Gastrocnemius medialis (tissue), 4 donors: ENCODE measurements at regions of chr19 and their contacts with region 1.

Region 1: DNA sequence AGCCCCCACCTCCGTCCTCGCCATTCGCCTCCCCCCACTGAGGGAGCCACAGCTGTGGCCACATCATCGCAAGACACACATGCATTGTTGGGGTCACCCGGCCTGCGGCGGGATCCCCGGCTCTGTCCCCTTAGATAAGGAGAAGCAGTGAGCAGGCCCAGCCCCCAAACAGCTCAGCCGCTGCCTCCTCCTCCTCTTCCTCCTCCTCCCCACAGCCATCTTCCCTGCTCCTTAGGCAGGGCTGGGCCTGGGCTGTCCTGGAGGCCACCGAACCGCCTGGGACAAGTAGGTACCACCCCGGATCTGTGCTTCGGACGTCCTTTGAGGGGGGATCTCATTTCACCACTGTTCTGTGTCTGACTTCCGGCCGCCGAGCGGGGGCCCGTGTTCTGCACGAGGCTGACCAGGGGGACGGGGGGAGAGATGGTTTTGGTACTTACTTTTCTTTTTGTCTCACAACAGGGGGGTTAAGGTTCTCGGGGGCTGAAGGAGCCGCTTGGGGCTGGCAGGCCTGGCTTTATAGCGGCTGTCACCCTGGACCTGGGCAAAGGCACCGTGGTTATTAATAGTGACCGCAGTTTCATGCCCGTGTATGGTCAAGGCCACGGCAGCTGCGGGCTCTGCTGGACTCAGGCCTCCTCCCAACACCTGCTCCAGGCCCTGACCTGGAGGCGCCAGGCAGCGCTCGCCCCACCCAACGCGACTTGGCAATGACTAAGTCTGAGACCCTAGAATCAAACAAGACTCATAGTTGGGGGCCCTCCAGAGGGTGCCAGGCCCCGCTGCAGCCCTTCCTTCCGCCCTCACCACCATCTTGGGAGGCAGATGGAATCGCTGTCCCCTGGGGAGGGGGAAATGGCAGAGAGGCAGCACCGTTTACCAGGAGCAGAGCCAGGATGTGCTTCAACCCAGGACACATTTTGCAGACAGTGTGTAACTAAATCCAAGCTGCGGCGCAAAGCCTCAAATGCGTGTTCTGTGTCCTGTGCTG is 18.3 kb downstream of the NMRK2 start:
- DNase-seq: peak; percentile 92 to 97
- ATAC-seq: peak; percentile 61 to 71
- H3K4me3 ChIP-seq: peak overlapping the region; percentile 74 to 85 (median 80)
- H3K27ac ChIP-seq: peak overlapping the region; percentile 98 to 99 (median 99)
- H3K4me1 ChIP-seq: peaks cover 32 to 48% of the 10 kb centered on the region in 2 donors
- H3K27me3 ChIP-seq: no peaks in the 10 kb centered on the region
- CTCF ChIP-seq: no peak
- POLR2A ChIP-seq: peak; percentile 87 to 92

Region 2: DNA sequence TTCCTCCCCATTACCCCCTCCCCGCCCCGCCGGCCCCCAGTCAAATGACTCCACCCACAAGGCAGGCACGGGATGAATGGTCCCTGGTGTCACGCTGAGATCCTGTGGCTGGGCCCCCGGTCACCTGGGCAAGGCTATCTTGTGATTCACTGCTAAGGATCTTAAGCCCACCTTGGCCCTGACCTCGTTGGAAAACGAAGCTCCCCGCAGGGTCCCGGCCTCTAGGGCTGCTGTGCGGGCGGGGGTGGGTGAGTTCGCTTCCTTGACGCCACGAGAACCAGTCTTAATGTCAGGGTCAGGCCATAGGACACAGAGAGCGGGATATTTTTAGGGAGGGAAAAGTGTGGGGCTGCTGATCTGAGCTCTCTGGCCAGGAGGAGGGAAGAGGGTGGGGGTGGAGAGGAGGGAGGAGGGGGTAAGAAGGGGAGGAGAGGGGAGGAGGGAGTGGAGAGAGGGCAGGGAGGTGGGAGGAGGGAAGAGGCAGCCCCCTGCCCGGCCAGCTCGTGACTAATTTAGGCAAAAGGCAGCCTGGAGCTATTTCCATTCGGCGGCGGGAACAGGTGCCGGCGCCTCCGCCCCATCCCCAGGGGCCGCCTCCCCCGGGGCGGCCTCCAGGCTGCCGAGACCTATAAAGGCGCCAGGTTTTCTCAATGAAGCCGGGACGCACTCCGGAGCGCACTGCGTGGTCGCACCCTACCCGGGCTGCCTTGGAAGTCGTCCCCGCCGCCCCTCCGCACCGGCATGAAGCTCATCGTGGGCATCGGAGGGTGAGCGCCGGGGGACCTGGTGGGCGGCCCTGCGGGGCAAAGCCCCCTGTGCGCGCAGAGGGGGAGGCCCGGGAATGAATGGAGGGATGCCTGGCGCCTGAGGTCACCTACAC is 18.0 kb before region 1 on chr19 and contains the start of gene NMRK2:
- in situ Hi-C with region 1: no loop called
- intact Hi-C with region 1: loop called (anchors 2 kb)
- DNase-seq: peak; percentile 65 to 86
- ATAC-seq: peak; percentile 51 to 56
- H3K4me3 ChIP-seq: peak within 1 kb of the TSS in 3 of 4 donors; percentile 34 to 41 (median 38)
- H3K27ac ChIP-seq: peak within 1 kb of the TSS; percentile 85 to 92 (median 89)
- H3K4me1 ChIP-seq: peaks cover 0 to 14% of the 10 kb centered on the region in 2 donors
- H3K27me3 ChIP-seq: no peaks in the 10 kb centered on the region
- CTCF ChIP-seq: no peak
- POLR2A ChIP-seq: peak; percentile 42 to 58
- total RNA-seq, gene NMRK2: 46.3 to 168 (median 106) TPM

Region 3: GRCh38 chr19:3970808-3971598 is 19.8 kb after region 1 on chr19 and contains the start of gene DAPK3:
- in situ Hi-C with region 1: no loop called
- intact Hi-C with region 1: loop called (anchors 2 kb)
- DNase-seq: peak; percentile 98
- ATAC-seq: peak; percentile 74 to 78
- H3K4me3 ChIP-seq: peak within 1 kb of the TSS; percentile 79 to 98 (median 90)
- H3K27ac ChIP-seq: peak within 1 kb of the TSS; percentile 97 to 100 (median 98)
- H3K4me1 ChIP-seq: peaks cover 42 to 43% of the 10 kb centered on the region in 2 donors
- H3K27me3 ChIP-seq: no peaks in the 10 kb centered on the region
- CTCF ChIP-seq: peak in 3 of 5 experiments; percentile 20 to 42 (median 26)
- POLR2A ChIP-seq: peak; percentile 100
- total RNA-seq, gene DAPK3: 61.3 to 135 (median 115) TPM

Region 4: GRCh38 chr19:4523306-4524110 is 572.3 kb after region 1 on chr19:
- in situ Hi-C with region 1: no loop called
- intact Hi-C with region 1: loop called (anchors 10 kb)
- DNase-seq: peak; percentile 35 to 70
- ATAC-seq: peak in 1 of 2 donors; percentile 14
- H3K4me3 ChIP-seq: no peak overlapping the region
- H3K27ac ChIP-seq: peak overlapping the region; percentile 43 to 97 (median 68)
- H3K4me1 ChIP-seq: peaks cover 11 to 13% of the 10 kb centered on the region in 2 donors
- H3K27me3 ChIP-seq: no peaks in the 10 kb centered on the region
- CTCF ChIP-seq: peak; percentile 26 to 87 (median 73)
- POLR2A ChIP-seq: no peak